ENCODE measurements at regions of chr11 and their contacts with region 1.

Region 1: GRCh38 chr11:126607374-126607773 is 251.9 kb downstream of the ST3GAL4 start:
- DNase-seq: no peak

Region 2: GRCh38 chr11:126655807-126656128 is 48.4 kb after region 1 on chr11:
- intact Hi-C with region 1: no loop called
- DNase-seq: no peak

Region 3: GRCh38 chr11:127345819-127346459 is 738.6 kb after region 1 on chr11:
- intact Hi-C with region 1: loop called (anchors 5 kb)
- DNase-seq: no peak